CD8-positive, alpha-beta T cell (primary cell): ENCODE measurements at regions of chr1 and their contacts with region 1.

Region 1: DNA sequence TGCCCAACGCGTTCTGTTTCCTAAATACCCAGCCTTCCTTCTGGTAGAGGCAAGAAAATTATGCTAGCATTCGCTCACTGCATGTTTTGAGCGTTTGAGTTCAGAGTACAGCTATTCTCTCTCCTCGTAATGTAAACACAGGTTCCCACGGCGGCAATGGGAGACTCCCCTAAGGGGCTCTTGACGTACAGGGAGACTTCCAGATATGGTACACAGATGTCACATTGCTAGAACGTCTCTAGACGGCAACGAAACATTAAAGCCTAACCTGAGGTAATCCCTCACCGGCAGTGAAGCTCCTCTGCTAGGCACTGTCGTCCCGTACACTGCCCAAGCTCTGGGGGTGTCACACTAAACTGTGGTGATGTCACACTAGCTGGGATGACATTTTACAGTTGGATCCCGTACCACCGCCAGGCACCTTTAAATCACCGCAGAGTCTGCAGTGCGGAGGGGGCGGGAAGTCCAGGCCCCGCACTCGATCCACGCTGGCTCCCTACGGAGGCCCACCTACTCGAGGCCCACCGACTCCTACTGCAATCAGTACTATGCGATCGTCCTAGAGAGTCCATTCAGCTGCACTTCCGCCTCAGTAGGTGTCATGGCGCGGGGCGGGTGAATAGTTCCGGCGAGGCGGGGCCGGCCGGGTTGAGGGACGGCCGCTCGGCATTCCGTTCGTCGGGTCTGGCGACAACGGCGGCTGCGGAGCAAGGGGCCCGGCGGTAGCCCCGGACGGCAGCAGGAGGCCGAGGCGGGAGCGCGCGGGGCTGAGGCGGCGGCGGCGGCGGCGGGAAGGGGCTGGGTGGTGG is at the start of gene HIPK1:
- DNase-seq: peak; percentile 86 to 96 (median 93)
- ATAC-seq: peak; percentile 65
- H3K4me3 ChIP-seq: peak within 1 kb of the TSS; percentile 89 to 93
- H3K4me3 Mint-ChIP-seq: peak within 1 kb of the TSS; percentile 99
- H3K27ac ChIP-seq: peak within 1 kb of the TSS; percentile 97 to 99
- H3K27ac Mint-ChIP-seq: peak within 1 kb of the TSS; percentile 100
- H3K4me1 ChIP-seq: peaks cover 37% of the 10 kb centered on the region
- H3K4me1 Mint-ChIP-seq: peaks cover 52% of the 10 kb centered on the region
- H3K27me3 ChIP-seq: no peaks in the 10 kb centered on the region
- H3K27me3 Mint-ChIP-seq: no peaks in the 10 kb centered on the region
- CTCF ChIP-seq: no peak
- total RNA-seq, gene HIPK1: 301 to 312 TPM

Region 2: GRCh38 chr1:113759333-113760101 is 169.6 kb before region 1 on chr1 and contains the start of gene PHTF1:
- CTCF ChIA-PET with region 1: no interaction called
- POLR2A ChIA-PET with region 1: interaction called, 3 read pairs
- intact Hi-C with region 1: loop called in 1 of 2 experiments (anchors 1 kb)
- DNase-seq: peak; percentile 3 to 77 (median 59)
- ATAC-seq: peak; percentile 73
- H3K4me3 ChIP-seq: peak within 1 kb of the TSS; percentile 84 to 94
- H3K4me3 Mint-ChIP-seq: peak within 1 kb of the TSS; percentile 90
- H3K27ac ChIP-seq: peak within 1 kb of the TSS; percentile 73 to 89
- H3K27ac Mint-ChIP-seq: peak within 1 kb of the TSS; percentile 96
- H3K4me1 ChIP-seq: peaks cover 4% of the 10 kb centered on the region
- H3K4me1 Mint-ChIP-seq: peaks cover 25% of the 10 kb centered on the region
- H3K27me3 ChIP-seq: no peaks in the 10 kb centered on the region
- H3K27me3 Mint-ChIP-seq: no peaks in the 10 kb centered on the region
- CTCF ChIP-seq: no peak
- total RNA-seq, gene PHTF1: 4.4 to 5.4 TPM

Region 3: DNA sequence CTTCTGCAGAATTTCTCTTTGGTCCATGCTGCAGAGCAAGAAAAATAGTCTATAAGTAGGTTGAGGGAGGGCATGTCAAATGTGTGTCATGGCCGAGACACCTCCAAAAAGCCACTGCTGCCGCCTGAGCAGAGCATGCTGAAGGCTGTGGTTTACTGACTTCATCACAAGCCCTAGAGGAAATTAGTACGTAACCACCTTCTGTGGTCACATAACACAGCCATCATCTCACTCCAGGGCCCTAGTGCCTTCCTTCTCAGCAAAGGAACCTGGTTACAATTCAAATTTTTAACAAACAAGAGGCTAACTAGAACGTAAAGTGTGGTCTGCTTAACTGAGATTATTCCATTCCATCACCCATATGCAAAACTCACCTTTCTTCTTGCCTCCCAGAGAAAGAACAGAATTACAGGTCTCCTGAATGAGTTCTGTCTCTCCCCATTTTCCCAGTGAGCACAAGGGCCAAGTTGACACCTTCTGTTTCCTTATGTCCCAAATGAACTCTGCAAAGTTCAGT is 57.5 kb before region 1 on chr1 and contains the start of gene PTPN22:
- CTCF ChIA-PET with region 1: interaction called, 6 read pairs
- POLR2A ChIA-PET with region 1: interaction called, 4 read pairs
- intact Hi-C with region 1: loop called (anchors 1 kb)
- DNase-seq: peak; percentile 64 to 96 (median 80)
- ATAC-seq: peak; percentile 84
- H3K4me3 ChIP-seq: peak within 1 kb of the TSS; percentile 53 to 66
- H3K4me3 Mint-ChIP-seq: peak within 1 kb of the TSS; percentile 83
- H3K27ac ChIP-seq: peak within 1 kb of the TSS; percentile 79 to 82
- H3K27ac Mint-ChIP-seq: peak within 1 kb of the TSS; percentile 98
- H3K4me1 ChIP-seq: peaks cover 65% of the 10 kb centered on the region
- H3K4me1 Mint-ChIP-seq: peaks cover 81% of the 10 kb centered on the region
- H3K27me3 ChIP-seq: no peaks in the 10 kb centered on the region
- H3K27me3 Mint-ChIP-seq: no peaks in the 10 kb centered on the region
- CTCF ChIP-seq: no peak
- total RNA-seq, gene PTPN22: 48.6 to 52.4 TPM

Region 4: DNA sequence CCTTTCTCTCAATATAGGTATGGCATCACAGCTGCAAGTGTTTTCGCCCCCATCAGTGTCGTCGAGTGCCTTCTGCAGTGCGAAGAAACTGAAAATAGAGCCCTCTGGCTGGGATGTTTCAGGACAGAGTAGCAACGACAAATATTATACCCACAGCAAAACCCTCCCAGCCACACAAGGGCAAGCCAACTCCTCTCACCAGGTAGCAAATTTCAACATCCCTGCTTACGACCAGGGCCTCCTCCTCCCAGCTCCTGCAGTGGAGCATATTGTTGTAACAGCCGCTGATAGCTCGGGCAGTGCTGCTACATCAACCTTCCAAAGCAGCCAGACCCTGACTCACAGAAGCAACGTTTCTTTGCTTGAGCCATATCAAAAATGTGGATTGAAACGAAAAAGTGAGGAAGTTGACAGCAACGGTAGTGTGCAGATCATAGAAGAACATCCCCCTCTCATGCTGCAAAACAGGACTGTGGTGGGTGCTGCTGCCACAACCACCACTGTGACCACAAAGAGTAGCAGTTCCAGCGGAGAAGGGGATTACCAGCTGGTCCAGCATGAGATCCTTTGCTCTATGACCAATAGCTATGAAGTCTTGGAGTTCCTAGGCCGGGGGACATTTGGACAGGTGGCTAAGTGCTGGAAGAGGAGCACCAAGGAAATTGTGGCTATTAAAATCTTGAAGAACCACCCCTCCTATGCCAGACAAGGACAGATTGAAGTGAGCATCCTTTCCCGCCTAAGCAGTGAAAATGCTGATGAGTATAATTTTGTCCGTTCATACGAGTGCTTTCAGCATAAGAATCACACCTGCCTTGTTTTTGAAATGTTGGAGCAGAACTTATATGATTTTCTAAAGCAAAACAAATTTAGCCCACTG is 11.5 kb after region 1 on chr1:
- CTCF ChIA-PET with region 1: interaction called, 53 read pairs
- POLR2A ChIA-PET with region 1: interaction called, 40 read pairs
- intact Hi-C with region 1: loop called (anchors 1 kb)
- DNase-seq: peak; percentile 10 to 86 (median 54)
- ATAC-seq: peak; percentile 60
- H3K4me3 ChIP-seq: peak overlapping the region; percentile 15 to 16
- H3K4me3 Mint-ChIP-seq: peak overlapping the region; percentile 78
- H3K27ac ChIP-seq: peak overlapping the region; percentile 31 to 71
- H3K27ac Mint-ChIP-seq: peak overlapping the region; percentile 91
- H3K4me1 ChIP-seq: peaks cover 77% of the 10 kb centered on the region
- H3K4me1 Mint-ChIP-seq: peaks cover 78% of the 10 kb centered on the region
- H3K27me3 ChIP-seq: no peaks in the 10 kb centered on the region
- H3K27me3 Mint-ChIP-seq: no peaks in the 10 kb centered on the region
- CTCF ChIP-seq: no peak

Region 5: GRCh38 chr1:113963281-113963906 is 34.2 kb after region 1 on chr1:
- CTCF ChIA-PET with region 1: interaction called, 32 read pairs
- POLR2A ChIA-PET with region 1: interaction called, 18 read pairs
- intact Hi-C with region 1: loop called in 1 of 2 experiments (anchors 1 kb)
- DNase-seq: peak in 2 of 9 experiments; percentile 28 to 59
- ATAC-seq: peak; percentile 61
- H3K4me3 ChIP-seq: no peak overlapping the region
- H3K4me3 Mint-ChIP-seq: no peak overlapping the region
- H3K27ac ChIP-seq: no peak overlapping the region
- H3K27ac Mint-ChIP-seq: peak overlapping the region; percentile 57
- H3K4me1 ChIP-seq: no peaks in the 10 kb centered on the region
- H3K4me1 Mint-ChIP-seq: peaks cover 38% of the 10 kb centered on the region
- H3K27me3 ChIP-seq: no peaks in the 10 kb centered on the region
- H3K27me3 Mint-ChIP-seq: no peaks in the 10 kb centered on the region
- CTCF ChIP-seq: no peak

Region 6: GRCh38 chr1:114130846-114131525 is 201.8 kb after region 1 on chr1:
- CTCF ChIA-PET with region 1: no interaction called
- POLR2A ChIA-PET with region 1: no interaction called
- intact Hi-C with region 1: no loop called
- DNase-seq: no peak
- ATAC-seq: no peak
- H3K4me3 ChIP-seq: no peak overlapping the region
- H3K4me3 Mint-ChIP-seq: no peak overlapping the region
- H3K27ac ChIP-seq: no peak overlapping the region
- H3K27ac Mint-ChIP-seq: no peak overlapping the region
- H3K4me1 ChIP-seq: no peaks in the 10 kb centered on the region
- H3K4me1 Mint-ChIP-seq: peaks cover 12% of the 10 kb centered on the region
- H3K27me3 ChIP-seq: no peaks in the 10 kb centered on the region
- H3K27me3 Mint-ChIP-seq: peaks cover 5% of the 10 kb centered on the region
- CTCF ChIP-seq: no peak

Region 7: GRCh38 chr1:114757455-114758250 is 828.5 kb after region 1 on chr1 and contains the start of gene CSDE1:
- CTCF ChIA-PET with region 1: no interaction called
- POLR2A ChIA-PET with region 1: no interaction called
- intact Hi-C with region 1: loop called in 1 of 2 experiments (anchors 10 kb)
- DNase-seq: peak; percentile 94 to 99 (median 97)
- ATAC-seq: peak; percentile 79
- H3K4me3 ChIP-seq: peak within 1 kb of the TSS; percentile 95 to 100
- H3K4me3 Mint-ChIP-seq: peak within 1 kb of the TSS; percentile 100
- H3K27ac ChIP-seq: peak within 1 kb of the TSS; percentile 97 to 100
- H3K27ac Mint-ChIP-seq: peak within 1 kb of the TSS; percentile 100
- H3K4me1 ChIP-seq: peaks cover 44% of the 10 kb centered on the region
- H3K4me1 Mint-ChIP-seq: peaks cover 51% of the 10 kb centered on the region
- H3K27me3 ChIP-seq: no peaks in the 10 kb centered on the region
- H3K27me3 Mint-ChIP-seq: no peaks in the 10 kb centered on the region
- CTCF ChIP-seq: no peak
- total RNA-seq, gene CSDE1: 732 to 774 TPM